Activated CD8-positive, alpha-beta memory T cell treated with anti-CD3 and anti-CD28 coated beads, Interleukin-2, amount 10 ng/mL, durations not matched to agents 7 days and 5 days (primary cell): ENCODE measurements at regions of chr2 and their contacts with region 1.

Region 1: GRCh38 chr2:160970052-160970965 is 189.9 kb upstream of the TANK start:
- DNase-seq: no peak
- ATAC-seq: no peak
- H3K4me3 Mint-ChIP-seq: no peak overlapping the region
- H3K27ac Mint-ChIP-seq: no peak overlapping the region
- H3K4me1 Mint-ChIP-seq: peaks cover 2% of the 10 kb centered on the region
- H3K27me3 Mint-ChIP-seq: peaks cover 14% of the 10 kb centered on the region

Region 2: GRCh38 chr2:160109936-160110673 is 860.2 kb before region 1 on chr2:
- CTCF ChIA-PET with region 1: interaction called, 13 read pairs
- DNase-seq: peak; percentile 50
- ATAC-seq: peak; percentile 64
- H3K4me3 Mint-ChIP-seq: no peak overlapping the region
- H3K27ac Mint-ChIP-seq: no peak overlapping the region
- H3K4me1 Mint-ChIP-seq: peaks cover 2% of the 10 kb centered on the region
- H3K27me3 Mint-ChIP-seq: peaks cover 45% of the 10 kb centered on the region

Region 3: DNA sequence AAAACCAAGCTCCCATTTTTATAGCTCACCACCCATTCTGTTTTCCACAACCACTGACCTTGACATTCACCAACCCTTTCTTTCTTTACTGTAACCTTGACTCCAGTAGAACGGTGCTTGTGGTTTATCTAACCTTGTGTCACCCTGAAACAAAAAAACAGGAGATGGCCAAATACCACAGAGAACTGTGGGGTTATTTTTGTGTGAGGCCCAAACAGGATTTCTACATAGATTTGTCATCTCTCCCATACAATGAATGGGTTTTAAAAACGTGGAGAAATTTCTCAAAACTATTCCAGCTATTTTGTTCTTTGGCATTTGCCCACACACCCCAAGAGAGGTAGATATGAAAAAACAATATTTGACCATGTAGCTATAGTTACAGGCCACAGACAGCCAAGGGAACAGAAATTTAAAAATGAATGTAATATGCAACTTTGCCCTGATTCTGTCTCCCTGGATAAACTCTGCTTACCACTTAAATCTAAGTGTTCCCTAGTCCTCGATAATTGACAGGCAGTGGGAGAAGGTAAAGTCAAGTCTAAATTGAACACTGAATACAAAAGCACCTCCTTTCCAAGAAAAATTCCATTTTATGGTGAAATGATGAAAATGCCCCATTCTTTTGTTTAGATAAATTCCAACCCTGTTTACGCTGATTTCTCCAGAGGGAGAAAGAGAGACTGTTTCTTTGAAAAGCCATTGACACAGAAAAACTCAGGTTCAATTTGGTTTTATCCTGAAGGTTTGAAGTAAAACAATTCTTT is 41.3 kb before region 1 on chr2:
- CTCF ChIA-PET with region 1: no interaction called
- DNase-seq: no peak
- ATAC-seq: no peak
- H3K4me3 Mint-ChIP-seq: no peak overlapping the region
- H3K27ac Mint-ChIP-seq: no peak overlapping the region
- H3K4me1 Mint-ChIP-seq: peaks cover 2% of the 10 kb centered on the region
- H3K27me3 Mint-ChIP-seq: peaks cover 2% of the 10 kb centered on the region

Region 4: GRCh38 chr2:161049559-161049958 is 79.2 kb after region 1 on chr2:
- CTCF ChIA-PET with region 1: no interaction called
- DNase-seq: no peak
- ATAC-seq: no peak
- H3K4me3 Mint-ChIP-seq: no peak overlapping the region
- H3K27ac Mint-ChIP-seq: no peak overlapping the region
- H3K4me1 Mint-ChIP-seq: no peaks in the 10 kb centered on the region
- H3K27me3 Mint-ChIP-seq: peaks cover 67% of the 10 kb centered on the region

Region 5: GRCh38 chr2:161344692-161345091 is 374.4 kb after region 1 on chr2:
- CTCF ChIA-PET with region 1: no interaction called
- DNase-seq: no peak
- ATAC-seq: no peak
- H3K4me3 Mint-ChIP-seq: no peak overlapping the region
- H3K27ac Mint-ChIP-seq: no peak overlapping the region
- H3K4me1 Mint-ChIP-seq: no peaks in the 10 kb centered on the region
- H3K27me3 Mint-ChIP-seq: no peaks in the 10 kb centered on the region